Caco-2 (cell line): ENCODE measurements at regions of chr5 and their contacts with region 1.

Region 1: GRCh38 chr5:78269088-78269703 is 25.3 kb downstream of the AP3B1 start:
- DNase-seq: no peak
- H3K4me3 ChIP-seq: no peak overlapping the region
- H3K4me3 Mint-ChIP-seq: no peak overlapping the region
- H3K27ac Mint-ChIP-seq: no peak overlapping the region
- H3K4me1 ChIP-seq: no peaks in the 10 kb centered on the region
- H3K4me1 Mint-ChIP-seq: peaks cover 10% of the 10 kb centered on the region
- H3K27me3 ChIP-seq: no peaks in the 10 kb centered on the region
- H3K27me3 Mint-ChIP-seq: no peaks in the 10 kb centered on the region
- CTCF ChIP-seq: peak; percentile 25 to 40

Region 2: DNA sequence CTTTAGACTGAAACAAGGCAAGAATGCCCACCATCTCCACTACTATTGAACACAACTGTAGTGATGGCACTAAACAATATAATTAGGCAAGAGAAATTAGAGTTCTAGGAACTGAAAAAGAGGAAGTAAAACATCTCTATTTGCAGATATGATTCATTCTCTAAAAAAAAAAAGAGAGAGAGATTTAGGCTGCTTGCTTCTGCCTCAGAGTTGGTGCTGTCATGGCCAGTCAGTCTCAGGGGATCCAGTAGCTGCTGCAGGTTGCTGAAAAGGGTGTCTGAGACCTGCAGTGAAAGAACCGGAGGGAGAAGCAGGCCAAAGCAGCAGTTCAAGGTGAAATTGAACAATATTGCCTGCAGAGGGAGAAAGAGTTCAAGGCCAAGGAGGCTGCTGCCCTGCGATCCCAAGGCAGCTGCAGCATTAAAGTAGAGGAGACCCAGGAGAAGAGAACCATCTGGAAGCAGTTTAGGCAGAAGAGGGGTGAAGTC is 47.2 kb before region 1 on chr5:
- CTCF ChIA-PET with region 1: interaction called, 7 read pairs
- POLR2A ChIA-PET with region 1: no interaction called
- intact Hi-C with region 1: loop called (anchors 1 kb)
- DNase-seq: peak in 1 of 2 experiments; percentile 33
- H3K4me3 ChIP-seq: no peak overlapping the region
- H3K4me3 Mint-ChIP-seq: no peak overlapping the region
- H3K27ac Mint-ChIP-seq: no peak overlapping the region
- H3K4me1 ChIP-seq: no peaks in the 10 kb centered on the region
- H3K4me1 Mint-ChIP-seq: no peaks in the 10 kb centered on the region
- H3K27me3 ChIP-seq: no peaks in the 10 kb centered on the region
- H3K27me3 Mint-ChIP-seq: no peaks in the 10 kb centered on the region
- CTCF ChIP-seq: peak in 1 of 2 experiments; percentile 32

Region 3: DNA sequence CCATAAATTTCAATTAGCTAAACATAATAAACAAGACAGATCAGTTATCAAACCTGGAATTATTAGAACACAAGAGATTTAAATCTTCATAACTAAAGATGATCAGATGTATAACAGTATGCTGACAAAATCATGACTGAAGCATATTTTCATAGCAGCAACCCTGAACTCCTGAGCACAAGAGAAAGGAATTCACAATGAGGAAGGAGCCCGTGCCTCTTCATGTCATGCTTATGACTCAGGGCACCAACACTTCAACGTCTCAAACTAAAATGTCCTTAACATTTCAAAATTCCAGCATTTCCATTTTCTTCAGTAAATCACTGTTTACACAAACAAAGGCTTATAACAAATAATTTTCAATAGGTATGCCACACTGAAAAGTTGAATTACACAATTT is 18.6 kb after region 1 on chr5:
- CTCF ChIA-PET with region 1: no interaction called
- POLR2A ChIA-PET with region 1: no interaction called
- intact Hi-C with region 1: no loop called
- DNase-seq: no peak
- H3K4me3 ChIP-seq: no peak overlapping the region
- H3K4me3 Mint-ChIP-seq: no peak overlapping the region
- H3K27ac Mint-ChIP-seq: no peak overlapping the region
- H3K4me1 ChIP-seq: no peaks in the 10 kb centered on the region
- H3K4me1 Mint-ChIP-seq: peaks cover 22% of the 10 kb centered on the region
- H3K27me3 ChIP-seq: no peaks in the 10 kb centered on the region
- H3K27me3 Mint-ChIP-seq: no peaks in the 10 kb centered on the region
- CTCF ChIP-seq: no peak